Activated CD8-positive, alpha-beta T cell treated with anti-CD3 and anti-CD28 coated beads, Interleukin-2, amount 10 ng/mL, durations not matched to agents 7 days and 5 days (primary cell): ENCODE measurements at regions of chr1 and their contacts with region 1.

Region 1: DNA sequence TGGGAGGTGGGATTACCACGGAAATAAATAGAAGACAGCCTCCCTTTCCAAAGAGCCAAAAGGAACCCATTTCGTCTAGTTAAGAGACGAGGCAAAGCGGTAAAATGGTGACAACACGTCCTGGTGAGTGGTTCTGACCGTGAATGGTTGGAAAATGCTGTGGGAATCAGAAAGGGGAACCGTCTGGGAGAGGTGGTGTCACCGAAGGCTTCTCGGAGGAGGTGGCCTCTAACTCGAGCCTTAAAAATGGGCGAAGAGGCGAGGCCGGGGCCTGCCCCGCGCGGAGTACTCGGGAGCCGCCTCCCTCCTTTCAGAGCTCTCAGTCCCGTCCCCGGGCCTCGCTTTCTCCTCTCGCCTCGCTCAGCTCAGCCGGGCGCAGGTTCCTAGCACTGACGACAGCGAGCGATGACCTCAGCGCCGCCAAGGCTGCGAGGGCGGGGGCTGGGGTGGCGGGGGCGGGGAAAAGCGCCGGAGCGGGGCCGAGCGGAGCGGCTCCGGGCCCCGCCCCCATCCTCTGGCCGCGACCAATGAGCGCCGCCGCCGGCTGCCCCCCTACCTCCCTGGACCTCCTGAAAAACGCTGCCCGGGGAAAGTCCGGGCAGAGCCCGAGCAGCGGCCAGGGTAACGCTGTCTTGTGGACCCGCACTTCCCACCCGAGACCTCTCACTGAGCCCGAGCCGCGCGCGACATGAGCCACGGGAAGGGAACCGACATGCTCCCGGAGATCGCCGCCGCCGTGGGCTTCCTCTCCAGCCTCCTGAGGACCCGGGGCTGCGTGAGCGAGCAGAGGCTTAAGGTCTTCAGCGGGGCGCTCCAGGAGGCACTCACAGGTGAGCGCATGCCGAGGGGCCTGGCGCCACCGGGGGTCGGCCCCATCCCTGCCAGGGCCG is at the start of gene BTG2:
- DNase-seq: peak; percentile 93
- ATAC-seq: peak; percentile 80
- H3K4me3 Mint-ChIP-seq: peak within 1 kb of the TSS; percentile 86
- H3K27ac Mint-ChIP-seq: peak within 1 kb of the TSS; percentile 89
- H3K4me1 Mint-ChIP-seq: peaks cover 67% of the 10 kb centered on the region
- H3K27me3 Mint-ChIP-seq: no peaks in the 10 kb centered on the region
- total RNA-seq, gene BTG2: 58.6 to 58.9 TPM

Region 2: DNA sequence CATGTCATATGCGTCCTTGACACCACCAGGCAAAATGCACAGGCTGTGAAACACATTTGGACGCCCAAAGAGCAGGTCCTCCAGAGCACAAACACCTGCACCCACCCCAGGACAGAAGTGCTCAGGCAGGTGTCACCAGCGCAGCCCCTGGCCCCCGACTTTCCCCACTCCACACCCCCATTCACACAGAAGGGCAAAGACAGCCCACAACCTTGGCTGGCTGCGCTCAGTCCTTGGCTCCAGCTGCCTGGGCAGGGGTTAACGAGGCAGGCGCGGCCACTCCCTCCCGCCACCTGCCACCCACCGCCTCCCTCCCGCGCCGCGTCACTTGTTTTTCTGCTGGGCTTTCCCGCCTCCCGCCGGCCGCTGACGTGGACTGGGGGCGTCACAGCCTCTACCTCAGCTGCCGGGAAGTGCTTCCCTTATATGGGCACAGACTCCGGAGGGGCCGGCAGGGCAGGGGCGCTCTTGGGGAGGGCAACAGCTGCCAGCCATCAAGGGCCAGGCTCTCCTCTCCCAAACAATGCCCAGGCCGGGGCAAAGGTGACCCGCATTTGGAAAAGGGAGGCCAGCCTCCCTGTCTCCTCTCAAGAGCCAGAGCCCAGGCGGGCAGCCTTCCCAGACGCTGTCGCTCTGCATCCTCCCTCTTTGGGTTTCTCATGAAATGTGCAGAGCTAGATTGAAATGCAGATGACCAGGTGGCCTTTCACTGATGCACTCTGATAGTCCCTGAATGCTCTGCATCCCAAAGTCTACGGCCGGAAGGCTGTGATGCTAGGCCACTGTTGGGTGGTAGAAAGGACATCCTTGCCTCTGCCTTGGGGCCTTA is 14.7 kb before region 1 on chr1:
- CTCF ChIA-PET with region 1: interaction called, 74 read pairs
- POLR2A ChIA-PET with region 1: interaction called, 376 read pairs
- DNase-seq: peak; percentile 97
- ATAC-seq: peak; percentile 51
- H3K4me3 Mint-ChIP-seq: peak overlapping the region; percentile 81
- H3K27ac Mint-ChIP-seq: peak overlapping the region; percentile 99
- H3K4me1 Mint-ChIP-seq: peaks cover 86% of the 10 kb centered on the region
- H3K27me3 Mint-ChIP-seq: no peaks in the 10 kb centered on the region

Region 3: DNA sequence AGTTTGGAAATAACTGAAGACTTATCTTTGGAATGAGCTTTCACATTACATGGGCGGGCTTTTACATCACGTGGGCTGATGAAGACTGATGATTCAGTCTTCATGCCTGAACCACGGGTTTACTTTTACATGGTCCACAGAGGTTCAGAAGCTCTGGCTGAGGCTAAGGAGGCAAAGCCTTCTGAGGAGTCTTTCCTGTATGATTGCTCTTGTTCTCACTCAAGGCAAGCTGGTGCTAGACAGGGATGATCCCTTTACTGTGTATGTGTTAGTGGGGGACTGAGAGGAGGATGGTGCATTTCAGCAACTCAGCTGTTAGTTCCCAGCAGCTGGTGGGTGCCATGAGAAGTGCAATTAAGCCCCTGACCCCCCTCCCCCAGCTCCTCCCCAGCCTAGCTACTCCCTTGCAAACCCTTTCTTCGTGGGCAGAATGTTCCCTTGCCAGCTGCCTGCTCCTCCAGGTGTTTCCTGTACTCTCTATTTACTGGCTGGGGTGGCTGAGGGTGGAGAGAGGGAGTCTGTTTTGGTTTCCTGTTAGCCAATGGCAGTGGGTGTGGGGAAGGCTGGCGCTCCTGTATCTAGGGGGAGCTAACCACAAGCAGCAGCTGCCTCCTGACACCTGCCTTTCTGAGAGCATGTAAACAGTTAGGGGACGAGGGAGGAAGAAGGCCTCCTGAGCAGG is 15.6 kb after region 1 on chr1:
- CTCF ChIA-PET with region 1: interaction called, 203 read pairs
- POLR2A ChIA-PET with region 1: interaction called, 25 read pairs
- DNase-seq: peak; percentile 86
- ATAC-seq: peak; percentile 81
- H3K4me3 Mint-ChIP-seq: peak overlapping the region; percentile 61
- H3K27ac Mint-ChIP-seq: peak overlapping the region; percentile 90
- H3K4me1 Mint-ChIP-seq: peaks cover 62% of the 10 kb centered on the region
- H3K27me3 Mint-ChIP-seq: peaks cover 3% of the 10 kb centered on the region

Region 4: DNA sequence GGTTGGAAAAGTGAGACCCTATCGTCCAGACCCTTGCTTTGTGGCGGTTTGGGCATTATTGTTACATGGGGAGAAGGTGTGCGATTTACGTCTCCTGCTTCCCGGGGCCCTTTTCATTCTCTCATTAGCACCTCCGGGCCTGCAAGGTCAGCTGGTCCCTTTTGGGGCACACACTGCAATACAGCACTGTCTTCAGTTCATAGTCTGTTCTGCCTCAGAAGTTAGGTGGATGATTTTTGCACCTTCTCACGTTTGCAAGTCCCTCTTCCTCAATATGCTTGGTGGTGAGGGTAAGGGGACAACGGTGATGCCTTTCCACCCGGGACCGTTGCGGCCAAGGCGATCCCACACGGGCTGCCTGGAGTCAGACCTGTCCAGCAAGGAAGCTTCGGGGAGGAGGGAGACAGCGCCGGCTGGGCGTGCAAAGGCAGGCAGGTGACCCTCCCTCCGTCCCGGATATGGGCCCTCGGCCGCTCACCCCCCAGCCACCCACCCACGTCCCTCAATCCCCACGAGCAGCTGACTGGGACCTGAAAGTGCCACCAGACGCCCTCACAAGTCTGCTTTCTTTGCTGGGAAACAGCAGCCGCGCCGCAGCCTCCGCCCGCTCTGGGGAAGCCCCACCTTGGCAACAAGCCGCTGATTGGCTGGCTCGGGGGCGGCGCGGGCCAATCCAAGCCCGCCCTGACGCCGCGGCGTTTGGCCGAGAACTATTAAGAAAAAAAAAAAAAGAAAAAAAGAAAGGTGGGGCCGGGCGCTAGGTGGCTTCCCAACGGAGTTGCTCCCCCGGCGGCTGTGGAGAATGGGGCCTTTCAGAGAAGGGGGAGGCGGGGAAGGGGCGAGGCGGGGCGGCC is 21.9 kb after region 1 on chr1:
- CTCF ChIA-PET with region 1: interaction called, 203 read pairs
- POLR2A ChIA-PET with region 1: interaction called, 6 read pairs
- DNase-seq: peak; percentile 95
- ATAC-seq: peak; percentile 92
- H3K4me3 Mint-ChIP-seq: peak overlapping the region; percentile 73
- H3K27ac Mint-ChIP-seq: peak overlapping the region; percentile 93
- H3K4me1 Mint-ChIP-seq: peaks cover 66% of the 10 kb centered on the region
- H3K27me3 Mint-ChIP-seq: peaks cover 2% of the 10 kb centered on the region